Endothelial cell of umbilical vein (primary cell): ENCODE measurements at regions of chr16 and their contacts with region 1.

Region 1: DNA sequence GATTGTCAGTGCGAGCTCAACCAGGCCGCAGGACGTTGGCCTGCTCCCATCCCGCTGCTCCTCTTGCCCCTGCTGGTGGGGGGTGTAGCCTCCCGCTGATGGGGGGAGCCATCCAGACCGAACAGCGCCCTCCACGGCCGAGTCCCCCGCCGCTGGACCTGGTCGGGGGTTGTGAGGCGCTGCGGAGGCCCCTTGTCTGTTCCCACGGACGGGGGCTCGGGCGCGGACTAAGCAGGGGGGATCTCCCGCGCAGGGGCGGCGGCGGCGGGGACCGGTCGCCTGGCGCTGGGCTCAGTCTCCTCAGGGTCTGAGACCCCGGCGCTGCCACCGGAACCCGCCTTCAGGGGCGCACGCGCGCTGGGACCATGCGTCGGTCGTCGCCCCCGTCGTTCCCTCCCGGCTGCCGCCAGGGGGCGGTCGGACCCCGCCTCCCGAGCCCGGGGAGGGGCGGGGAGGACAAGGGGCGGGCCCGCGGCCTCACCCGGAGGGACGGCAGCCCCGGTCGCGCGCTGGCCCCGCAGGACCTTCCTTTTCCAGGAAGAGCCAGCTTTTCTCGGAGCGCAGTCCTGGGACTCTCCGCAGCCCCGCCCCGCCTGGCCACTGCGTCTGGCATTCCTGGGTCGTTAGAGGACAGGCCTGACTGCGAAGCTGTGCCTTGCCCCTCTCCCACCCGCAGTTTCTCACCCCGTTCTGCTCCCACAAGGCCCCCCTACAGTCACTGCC is 6.3 kb upstream of the IL32 start:
- DNase-seq: peak; percentile 85
- H3K4me3 ChIP-seq: peak overlapping the region; percentile 44 to 64 (median 59)
- H3K27ac ChIP-seq: peak overlapping the region; percentile 58
- H3K4me1 ChIP-seq: peaks cover 9% of the 10 kb centered on the region
- H3K27me3 ChIP-seq: no peaks in the 10 kb centered on the region
- CTCF ChIP-seq: peak; percentile 73 to 84
- POLR2A ChIP-seq: peak; percentile 76

Region 2: DNA sequence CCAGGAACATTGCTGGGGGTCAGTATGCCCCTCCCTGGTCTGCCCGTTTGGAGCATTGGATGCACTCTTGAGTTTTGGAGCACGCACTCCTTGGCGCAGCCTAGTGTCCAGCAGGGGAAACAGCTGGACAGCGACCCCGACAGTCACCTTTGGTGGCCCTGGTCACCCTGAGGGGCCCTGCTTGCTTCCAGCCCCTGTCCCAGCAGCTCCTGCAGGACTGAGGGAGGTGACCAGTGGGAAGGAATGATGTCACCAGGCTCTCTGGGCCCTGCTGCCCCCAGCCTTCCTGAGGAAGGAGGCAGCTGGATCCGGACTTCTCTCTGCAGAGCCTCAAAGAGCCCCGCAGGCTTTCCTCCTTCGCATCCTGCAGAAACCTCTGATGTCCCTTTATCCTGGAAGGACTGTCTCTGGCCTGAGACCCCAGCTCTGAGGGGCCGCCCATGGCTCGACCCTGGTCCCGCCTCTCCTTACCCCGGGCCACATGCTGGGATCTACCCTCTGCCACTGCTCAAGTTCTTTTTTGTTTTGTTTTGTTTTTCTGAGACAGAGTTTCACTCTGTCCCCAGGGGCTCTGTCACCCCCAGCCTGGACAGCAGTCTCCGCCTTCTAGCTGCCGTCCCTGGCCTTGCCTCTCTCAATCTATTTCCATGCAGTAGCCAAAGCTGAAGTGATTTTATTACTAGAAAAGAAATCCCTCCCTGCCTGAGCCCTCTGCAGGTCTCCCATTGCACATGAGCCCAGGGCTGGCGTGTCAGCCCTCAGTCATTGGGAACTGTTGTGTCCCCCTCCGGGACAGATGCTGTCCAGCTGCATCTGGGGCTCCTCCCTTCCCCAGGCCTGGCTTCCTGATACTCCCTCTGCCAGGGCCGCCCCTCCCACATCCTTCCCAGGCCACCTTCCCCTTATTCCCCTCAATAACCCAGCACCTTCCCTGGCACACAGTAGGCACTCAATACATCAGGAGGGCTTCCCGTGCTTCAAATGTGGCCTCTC is 28.4 kb after region 1 on chr16:
- CTCF ChIA-PET with region 1: interaction called, 29 read pairs
- POLR2A ChIA-PET with region 1: no interaction called
- dilution Hi-C with region 1: no loop called
- intact Hi-C with region 1: loop called (anchors 1 kb)
- DNase-seq: peak; percentile 89
- H3K4me3 ChIP-seq: peak overlapping the region in 1 of 3 experiments; percentile 5
- H3K27ac ChIP-seq: peak overlapping the region; percentile 73
- H3K4me1 ChIP-seq: peaks cover 25% of the 10 kb centered on the region
- H3K27me3 ChIP-seq: no peaks in the 10 kb centered on the region
- CTCF ChIP-seq: peak; percentile 3 to 23
- POLR2A ChIP-seq: peak; percentile 52

Region 3: DNA sequence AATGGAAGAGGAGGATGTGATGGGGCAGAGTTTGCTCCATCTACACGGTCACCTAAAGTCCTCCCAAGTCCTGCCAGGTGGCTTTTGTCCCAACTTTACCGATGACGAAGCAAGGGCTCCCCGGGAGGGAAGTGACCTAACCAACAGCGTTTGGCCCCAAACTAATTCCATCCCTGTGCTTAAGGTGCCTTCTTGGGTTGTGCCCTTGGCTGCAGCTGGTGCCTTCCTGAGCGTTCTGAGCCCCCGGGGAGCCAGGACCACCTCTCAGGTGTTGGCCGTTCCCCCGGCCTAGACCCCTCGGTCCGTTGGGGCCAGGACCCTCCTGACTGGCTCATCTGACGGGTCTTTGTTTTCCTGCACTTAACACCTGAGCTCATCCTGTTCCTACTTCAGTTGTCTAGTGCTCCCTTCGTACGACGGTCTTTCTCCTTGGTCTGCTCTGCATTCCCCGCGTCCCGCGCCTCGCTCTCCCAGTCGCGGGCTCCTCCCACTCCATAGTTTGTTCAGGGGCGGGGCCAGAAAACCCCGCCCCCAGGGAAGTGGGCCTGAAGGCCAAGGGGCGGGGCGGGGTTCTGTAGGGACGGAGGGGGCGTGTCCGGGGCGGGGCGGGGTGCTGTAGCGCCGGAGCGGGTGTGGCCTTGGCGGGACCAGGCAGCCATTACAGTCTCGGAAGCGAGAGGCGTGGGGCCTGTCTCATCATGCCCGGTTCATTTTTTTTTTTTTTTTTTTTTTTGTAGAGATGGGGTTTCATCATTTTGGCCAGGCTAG is 40.8 kb after region 1 on chr16:
- CTCF ChIA-PET with region 1: interaction called, 29 read pairs
- POLR2A ChIA-PET with region 1: no interaction called
- dilution Hi-C with region 1: no loop called
- intact Hi-C with region 1: loop called (anchors 1 kb)
- DNase-seq: peak; percentile 81
- H3K4me3 ChIP-seq: no peak overlapping the region
- H3K27ac ChIP-seq: no peak overlapping the region
- H3K4me1 ChIP-seq: peaks cover 26% of the 10 kb centered on the region
- H3K27me3 ChIP-seq: peaks cover 0 to 2% of the 10 kb centered on the region in 2 experiments
- CTCF ChIP-seq: no peak
- POLR2A ChIP-seq: no peak

Region 4: DNA sequence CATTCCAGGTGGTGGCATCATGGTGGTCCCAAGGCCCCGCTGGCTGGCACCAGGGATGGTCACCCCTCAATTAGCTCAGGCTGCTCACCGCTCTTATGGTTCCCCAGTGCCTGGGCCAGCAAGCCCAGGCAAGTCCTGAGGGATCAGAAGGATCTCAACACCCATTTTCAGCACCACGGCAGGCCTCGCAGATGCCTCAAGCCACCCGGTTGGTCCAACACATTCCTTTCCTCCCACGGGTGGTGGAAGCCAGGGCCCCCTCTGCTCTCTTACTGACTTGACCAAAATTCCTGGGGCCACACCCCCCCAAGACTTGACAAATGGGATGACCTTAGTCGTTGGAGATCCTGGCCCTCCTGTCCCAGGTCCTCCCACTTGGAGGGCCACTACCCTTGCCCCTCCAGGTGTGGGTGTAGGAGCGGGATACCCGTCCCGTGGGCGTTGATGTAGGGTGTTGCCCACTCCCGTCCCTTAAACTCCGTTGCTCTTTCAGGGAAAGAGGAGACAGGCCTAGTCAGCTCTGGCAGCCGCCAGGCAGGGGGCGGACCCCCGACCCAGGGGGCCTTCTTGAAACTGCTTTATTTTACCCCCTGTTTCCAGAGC is 59.1 kb after region 1 on chr16:
- CTCF ChIA-PET with region 1: interaction called, 38 read pairs
- POLR2A ChIA-PET with region 1: no interaction called
- dilution Hi-C with region 1: no loop called
- intact Hi-C with region 1: loop called (anchors 1 kb)
- DNase-seq: no peak
- H3K4me3 ChIP-seq: no peak overlapping the region
- H3K27ac ChIP-seq: no peak overlapping the region
- H3K4me1 ChIP-seq: peaks cover 7% of the 10 kb centered on the region
- H3K27me3 ChIP-seq: no peaks in the 10 kb centered on the region
- CTCF ChIP-seq: no peak
- POLR2A ChIP-seq: no peak

Region 5: DNA sequence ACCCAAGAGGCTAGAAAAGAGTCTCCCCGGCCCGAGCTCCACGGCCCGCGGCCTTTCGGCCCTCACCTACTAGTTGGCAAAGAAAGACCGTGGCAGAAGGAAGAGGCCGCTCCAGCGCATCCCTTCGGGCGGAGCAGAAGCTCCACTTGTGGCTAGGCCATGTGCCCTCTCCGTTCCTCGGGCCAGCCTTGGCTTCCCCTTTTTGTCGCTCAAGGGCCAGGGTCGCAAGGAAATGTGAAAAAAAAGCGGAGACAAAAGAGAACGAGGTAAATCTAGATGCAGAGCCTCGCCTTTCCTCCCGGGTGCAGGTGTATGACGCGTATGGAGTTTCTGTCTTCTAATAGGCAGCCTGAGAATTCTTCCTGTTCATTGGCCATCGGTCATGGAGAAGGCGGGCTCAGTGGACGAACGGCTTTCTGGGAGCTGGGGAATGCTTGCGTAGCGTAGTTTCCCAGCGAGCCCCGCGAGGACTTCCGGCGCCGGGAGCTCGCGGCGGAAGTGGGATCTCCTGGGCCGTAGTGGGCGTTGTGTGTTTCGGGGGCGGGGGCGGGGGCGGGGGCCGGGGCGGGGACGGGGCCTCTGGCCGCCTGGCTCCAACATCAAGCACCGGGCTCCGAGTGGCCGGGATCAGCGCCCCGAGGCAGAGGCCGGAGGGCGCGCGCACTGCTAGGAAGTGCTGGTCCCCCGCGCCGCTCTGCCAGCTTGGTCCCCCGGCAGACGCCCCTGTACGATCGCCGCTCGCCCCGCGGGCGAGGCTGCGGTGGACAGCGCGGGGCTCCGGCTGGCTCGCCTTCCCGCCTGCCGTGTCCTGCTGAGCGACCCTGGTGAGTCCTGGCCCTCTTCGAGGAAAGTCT is 75.6 kb after region 1 on chr16 and contains the start of gene ZNF213:
- CTCF ChIA-PET with region 1: interaction called, 113 read pairs
- POLR2A ChIA-PET with region 1: interaction called, 5 read pairs
- dilution Hi-C with region 1: no loop called
- intact Hi-C with region 1: loop called (anchors 1 kb)
- DNase-seq: peak; percentile 98
- H3K4me3 ChIP-seq: peak within 1 kb of the TSS; percentile 77 to 99 (median 98)
- H3K27ac ChIP-seq: peak within 1 kb of the TSS; percentile 91
- H3K4me1 ChIP-seq: peaks cover 10% of the 10 kb centered on the region
- H3K27me3 ChIP-seq: no peaks in the 10 kb centered on the region
- CTCF ChIP-seq: no peak
- POLR2A ChIP-seq: peak; percentile 85
- total RNA-seq, gene ZNF213: 8.0 and 9.8 TPM in 2 replicates